ENCODE measurements at regions of chr4 and their contacts with region 1.

Region 1: DNA sequence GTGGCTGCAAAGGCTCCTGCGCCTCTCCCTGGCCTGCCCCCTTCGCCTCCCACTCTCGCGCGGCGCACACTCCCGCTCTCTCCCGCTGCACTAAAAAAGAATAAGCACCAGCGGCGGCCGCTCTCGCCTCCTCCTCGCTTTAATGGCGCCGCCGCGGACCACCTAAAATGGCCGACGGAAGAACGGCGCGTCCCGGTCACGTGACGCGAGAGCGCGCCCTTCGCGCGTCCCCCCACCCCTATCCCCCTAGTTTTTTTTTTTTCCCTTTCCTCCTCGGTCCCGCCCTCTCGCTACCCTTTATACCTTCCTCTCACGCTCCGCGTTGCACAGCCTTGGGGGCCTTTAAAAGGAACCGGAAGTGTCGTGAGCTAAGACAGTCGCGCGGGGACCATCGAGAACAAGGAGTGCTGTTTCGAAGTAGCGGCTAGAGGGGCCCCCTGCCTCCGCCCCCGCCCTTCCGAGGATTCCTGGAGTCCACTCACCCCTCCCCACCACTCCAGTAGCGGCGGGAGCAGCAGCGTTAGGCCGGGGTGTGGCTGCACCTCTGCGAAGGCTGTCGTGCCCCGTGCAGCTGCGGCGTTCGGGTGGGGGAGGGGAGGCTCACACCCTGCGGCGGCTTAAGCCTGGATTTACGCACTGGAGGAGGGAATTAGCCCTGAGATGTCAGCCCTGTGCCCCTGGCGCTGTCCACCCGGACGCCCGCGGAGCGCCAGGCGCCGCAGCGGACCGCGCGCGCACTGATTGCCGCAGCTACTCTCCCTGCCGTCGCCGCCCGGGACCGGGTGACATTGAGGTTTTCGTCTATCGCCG is at the start of gene HNRNPD:
- DNase-seq: peak; percentile 94
- H3K4me3 ChIP-seq: peak within 1 kb of the TSS; percentile 76 to 97 (median 90)
- H3K27ac ChIP-seq: peak within 1 kb of the TSS; percentile 99 to 100 (median 100)
- H3K4me1 ChIP-seq: peaks cover 21 to 51% (median 34%) of the 10 kb centered on the region in 3 donors
- H3K27me3 ChIP-seq: no peaks in the 10 kb centered on the region
- CTCF ChIP-seq: peak in 2 of 6 experiments; percentile 5 to 27
- POLR2A ChIP-seq: peak in 3 of 4 donors; percentile 22 to 90 (median 80)
- total RNA-seq, gene HNRNPD: 49.9 to 105 (median 71.0) TPM

Region 2: GRCh38 chr4:82428969-82429727 is 55.1 kb after region 1 on chr4:
- intact Hi-C with region 1: loop called (anchors 2 kb)
- DNase-seq: peak; percentile 58
- H3K4me3 ChIP-seq: peak overlapping the region; percentile 81 to 95 (median 85)
- H3K27ac ChIP-seq: peak overlapping the region; percentile 97 to 100 (median 98)
- H3K4me1 ChIP-seq: peaks cover 6 to 66% (median 31%) of the 10 kb centered on the region in 3 donors
- H3K27me3 ChIP-seq: no peaks in the 10 kb centered on the region
- CTCF ChIP-seq: peak; percentile 90 to 100 (median 98)
- POLR2A ChIP-seq: peak in 3 of 4 donors; percentile 24 to 83 (median 69)